Mammary epithelial cell (primary cell): ENCODE measurements at regions of chr3 and their contacts with region 1.

Region 1: DNA sequence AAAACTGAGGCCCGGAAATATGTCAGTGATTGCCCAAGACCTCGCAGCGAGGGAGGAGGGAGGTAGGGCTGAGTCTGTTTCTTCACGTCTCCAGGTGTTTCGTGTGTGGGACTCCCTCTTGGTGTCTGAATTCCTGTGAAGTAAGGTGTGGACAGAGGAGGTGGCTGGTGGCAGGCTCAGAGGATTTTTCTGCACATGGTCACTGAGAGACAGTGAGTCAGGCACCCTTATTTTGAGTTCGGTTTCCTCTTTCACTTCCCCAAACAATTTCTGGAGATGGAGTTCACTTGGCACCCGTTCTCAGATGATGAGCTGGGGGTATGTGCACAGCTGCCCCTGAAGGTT is 46.3 kb upstream of the VPS8 start:
- DNase-seq: peak; percentile 95
- H3K4me3 ChIP-seq: no peak overlapping the region
- H3K27ac ChIP-seq: peak overlapping the region; percentile 99
- H3K4me1 ChIP-seq: peaks cover 26% of the 10 kb centered on the region
- H3K27me3 ChIP-seq: no peaks in the 10 kb centered on the region
- CTCF ChIP-seq: no peak

Region 2: GRCh38 chr3:184481984-184482671 is 283.6 kb before region 1 on chr3:
- CTCF ChIA-PET with region 1: no interaction called
- dilution Hi-C with region 1: no loop called
- in situ Hi-C with region 1: no loop called
- intact Hi-C with region 1: no loop called
- DNase-seq: peak; percentile 45
- H3K4me3 ChIP-seq: no peak overlapping the region
- H3K27ac ChIP-seq: no peak overlapping the region
- H3K4me1 ChIP-seq: no peaks in the 10 kb centered on the region
- H3K27me3 ChIP-seq: no peaks in the 10 kb centered on the region
- CTCF ChIP-seq: peak in 1 of 2 donors; percentile 18

Region 3: GRCh38 chr3:184604039-184604601 is 161.6 kb before region 1 on chr3:
- CTCF ChIA-PET with region 1: no interaction called
- dilution Hi-C with region 1: no loop called
- in situ Hi-C with region 1: no loop called
- intact Hi-C with region 1: no loop called
- DNase-seq: no peak
- H3K4me3 ChIP-seq: no peak overlapping the region
- H3K27ac ChIP-seq: no peak overlapping the region
- H3K4me1 ChIP-seq: peaks cover 28% of the 10 kb centered on the region
- H3K27me3 ChIP-seq: no peaks in the 10 kb centered on the region
- CTCF ChIP-seq: no peak

Region 4: GRCh38 chr3:184711493-184712247 is 54.0 kb before region 1 on chr3 and contains the start of gene MAGEF1:
- CTCF ChIA-PET with region 1: no interaction called
- dilution Hi-C with region 1: no loop called
- in situ Hi-C with region 1: no loop called
- intact Hi-C with region 1: loop called (anchors 1 kb)
- DNase-seq: peak; percentile 77
- H3K4me3 ChIP-seq: peak within 1 kb of the TSS; percentile 74 to 90 (median 83)
- H3K27ac ChIP-seq: peak within 1 kb of the TSS; percentile 80
- H3K4me1 ChIP-seq: peaks cover 16% of the 10 kb centered on the region
- H3K27me3 ChIP-seq: no peaks in the 10 kb centered on the region
- CTCF ChIP-seq: no peak
- total RNA-seq, gene MAGEF1: 19.0 to 27.8 TPM

Region 5: GRCh38 chr3:184734903-184735701 is 30.6 kb before region 1 on chr3:
- CTCF ChIA-PET with region 1: no interaction called
- dilution Hi-C with region 1: loop called (anchors 5 kb)
- in situ Hi-C with region 1: loop called in 1 of 2 experiments (anchors 5 kb)
- intact Hi-C with region 1: loop called (anchors 1 kb)
- DNase-seq: no peak
- H3K4me3 ChIP-seq: no peak overlapping the region
- H3K27ac ChIP-seq: no peak overlapping the region
- H3K4me1 ChIP-seq: peaks cover 43% of the 10 kb centered on the region
- H3K27me3 ChIP-seq: no peaks in the 10 kb centered on the region
- CTCF ChIP-seq: no peak

Region 6: GRCh38 chr3:184740524-184741484 is 24.9 kb before region 1 on chr3:
- CTCF ChIA-PET with region 1: no interaction called
- dilution Hi-C with region 1: no loop called
- in situ Hi-C with region 1: no loop called
- intact Hi-C with region 1: loop called (anchors 1 kb)
- DNase-seq: peak; percentile 99
- H3K4me3 ChIP-seq: peak overlapping the region; percentile 12 to 36 (median 31)
- H3K27ac ChIP-seq: peak overlapping the region; percentile 99
- H3K4me1 ChIP-seq: peaks cover 51% of the 10 kb centered on the region
- H3K27me3 ChIP-seq: no peaks in the 10 kb centered on the region
- CTCF ChIP-seq: no peak

Region 7: GRCh38 chr3:184937611-184938010 is 171.9 kb after region 1 on chr3:
- CTCF ChIA-PET with region 1: no interaction called
- dilution Hi-C with region 1: no loop called
- in situ Hi-C with region 1: no loop called
- intact Hi-C with region 1: no loop called
- DNase-seq: no peak
- H3K4me3 ChIP-seq: no peak overlapping the region
- H3K27ac ChIP-seq: no peak overlapping the region
- H3K4me1 ChIP-seq: no peaks in the 10 kb centered on the region
- H3K27me3 ChIP-seq: no peaks in the 10 kb centered on the region
- CTCF ChIP-seq: no peak

Region 8: GRCh38 chr3:185937689-185938463 is 1172.2 kb after region 1 on chr3 and contains the start of gene TRA2B:
- CTCF ChIA-PET with region 1: no interaction called
- dilution Hi-C with region 1: no loop called
- in situ Hi-C with region 1: no loop called
- intact Hi-C with region 1: no loop called
- DNase-seq: peak; percentile 95
- H3K4me3 ChIP-seq: peak within 1 kb of the TSS; percentile 87 to 100 (median 98)
- H3K27ac ChIP-seq: peak within 1 kb of the TSS; percentile 99
- H3K4me1 ChIP-seq: peaks cover 18% of the 10 kb centered on the region
- H3K27me3 ChIP-seq: no peaks in the 10 kb centered on the region
- CTCF ChIP-seq: no peak
- total RNA-seq, gene TRA2B: 117 to 151 TPM